BJ (cell line): ENCODE measurements at regions of chr9 and their contacts with region 1.

Region 1: DNA sequence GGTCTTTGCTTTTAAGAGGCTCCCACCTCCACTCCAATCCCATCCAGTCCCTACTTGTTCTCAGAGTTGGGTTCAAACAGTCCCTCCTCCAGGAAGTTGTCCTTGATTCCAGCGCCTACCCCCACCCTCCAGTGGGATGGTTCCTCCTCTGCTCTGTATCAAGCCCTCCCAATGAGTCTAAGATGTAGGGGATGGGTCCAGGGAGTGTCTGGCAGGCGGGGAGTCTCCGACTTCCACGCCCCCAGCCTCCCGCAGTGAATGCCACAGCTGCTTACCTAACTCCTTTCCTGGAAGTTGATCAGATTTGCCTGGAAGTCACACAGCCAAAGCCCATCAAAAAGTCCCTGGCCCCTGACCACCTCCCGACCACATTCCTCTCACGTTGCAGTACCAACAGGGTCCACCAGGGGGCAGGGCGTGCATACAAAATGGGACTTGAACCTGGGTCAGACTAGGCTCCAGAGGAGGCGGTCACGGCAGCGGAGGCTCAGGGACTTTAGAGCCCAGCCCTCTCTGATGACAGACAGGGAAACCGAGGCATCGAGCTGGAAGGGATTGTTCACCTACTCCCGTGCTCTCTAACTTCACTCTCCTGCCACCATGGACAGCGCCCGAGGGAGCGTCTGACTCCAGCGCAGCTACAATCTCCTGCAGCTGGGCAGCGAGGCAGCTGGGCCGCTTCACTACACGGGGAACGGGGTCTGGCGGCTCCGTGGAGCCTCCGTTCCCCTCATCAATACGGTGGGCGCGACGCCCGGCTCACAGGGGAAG is 25.0 kb upstream of the TDRD7 start:
- DNase-seq: no peak
- H3K4me3 ChIP-seq: no peak overlapping the region
- H3K27me3 ChIP-seq: peaks cover 2% of the 10 kb centered on the region
- CTCF ChIP-seq: peak; percentile 99

Region 2: GRCh38 chr9:97160255-97160654 is 226.7 kb before region 1 on chr9:
- CTCF ChIA-PET with region 1: no interaction called
- POLR2A ChIA-PET with region 1: no interaction called
- DNase-seq: no peak
- H3K4me3 ChIP-seq: no peak overlapping the region
- H3K27me3 ChIP-seq: no peaks in the 10 kb centered on the region
- CTCF ChIP-seq: no peak

Region 3: GRCh38 chr9:97367729-97368128 is 19.2 kb before region 1 on chr9:
- CTCF ChIA-PET with region 1: interaction called, 14 read pairs
- POLR2A ChIA-PET with region 1: no interaction called
- DNase-seq: no peak
- H3K4me3 ChIP-seq: no peak overlapping the region
- H3K27me3 ChIP-seq: no peaks in the 10 kb centered on the region
- CTCF ChIP-seq: no peak

Region 4: DNA sequence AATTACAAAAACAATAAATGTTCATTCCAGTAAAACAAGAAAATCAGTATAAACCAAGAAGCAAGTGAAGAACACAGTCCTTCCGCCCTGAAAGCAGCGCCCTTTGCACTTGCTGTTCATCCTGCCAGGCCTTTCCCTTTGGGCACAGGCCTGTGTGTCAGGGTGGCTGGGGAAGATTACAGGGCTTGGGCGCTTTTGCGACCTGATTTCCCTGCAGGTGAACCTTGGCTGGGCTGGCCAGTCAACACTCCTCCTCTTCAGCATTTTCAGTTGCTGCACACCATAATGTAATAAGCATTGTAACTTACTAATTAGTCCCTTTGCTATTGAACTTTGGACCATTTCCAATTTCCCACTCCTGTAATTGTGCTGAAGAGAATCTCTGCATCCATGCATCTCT is 13.6 kb before region 1 on chr9:
- CTCF ChIA-PET with region 1: interaction called, 44 read pairs
- POLR2A ChIA-PET with region 1: no interaction called
- DNase-seq: no peak
- H3K4me3 ChIP-seq: no peak overlapping the region
- H3K27me3 ChIP-seq: no peaks in the 10 kb centered on the region
- CTCF ChIP-seq: no peak

Region 5: DNA sequence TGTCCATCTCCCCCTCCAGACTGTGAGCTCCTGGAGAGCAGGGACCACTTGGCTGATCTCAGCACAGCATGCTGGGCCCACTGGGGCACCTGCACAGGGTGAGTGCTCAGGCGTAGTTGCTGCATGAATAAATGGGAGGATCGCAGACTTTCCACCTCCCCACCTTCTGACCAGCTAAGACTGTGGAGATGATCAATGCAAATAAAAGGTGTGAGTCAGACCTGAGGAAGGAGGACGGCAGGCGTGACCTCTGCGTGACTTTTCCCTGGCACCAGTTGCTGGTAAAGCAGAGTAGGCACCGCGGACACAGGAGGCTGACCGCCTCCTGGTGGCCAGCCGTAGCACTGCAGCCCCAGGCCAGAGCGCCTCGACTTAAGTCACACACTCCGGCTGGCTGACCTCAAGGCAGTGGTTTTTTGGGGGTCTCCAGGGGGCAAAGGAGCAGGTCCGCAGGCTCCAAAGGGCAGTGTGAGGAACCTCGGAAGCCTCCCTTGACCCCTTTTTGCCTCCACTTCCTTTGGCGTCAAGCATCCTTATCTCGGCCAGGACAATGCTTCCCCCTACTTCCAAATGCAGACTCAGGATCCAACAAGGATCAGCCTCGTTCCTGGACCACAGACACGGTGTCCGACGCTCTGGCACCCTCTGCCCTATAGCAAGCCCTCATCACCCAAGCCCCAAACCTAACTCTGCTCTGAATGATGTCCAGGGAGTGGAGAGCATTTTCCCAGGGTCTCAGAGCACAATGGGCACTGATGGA is 12.3 kb after region 1 on chr9:
- CTCF ChIA-PET with region 1: interaction called, 50 read pairs
- POLR2A ChIA-PET with region 1: no interaction called
- DNase-seq: no peak
- H3K4me3 ChIP-seq: no peak overlapping the region
- H3K27me3 ChIP-seq: no peaks in the 10 kb centered on the region; the same call in 1 of the 2 replicates
- CTCF ChIP-seq: peak; percentile 98

Region 6: GRCh38 chr9:97459099-97459725 is 72.3 kb after region 1 on chr9:
- CTCF ChIA-PET with region 1: no interaction called
- POLR2A ChIA-PET with region 1: no interaction called
- DNase-seq: no peak
- H3K4me3 ChIP-seq: no peak overlapping the region
- H3K27me3 ChIP-seq: no peaks in the 10 kb centered on the region
- CTCF ChIP-seq: no peak

Region 7: GRCh38 chr9:97890038-97890437 is 503.1 kb after region 1 on chr9:
- CTCF ChIA-PET with region 1: no interaction called
- POLR2A ChIA-PET with region 1: no interaction called
- DNase-seq: no peak
- H3K4me3 ChIP-seq: no peak overlapping the region
- H3K27me3 ChIP-seq: no peaks in the 10 kb centered on the region
- CTCF ChIP-seq: peak; percentile 63